Heart right ventricle (tissue), 16 donors: ENCODE measurements at regions of chr4 and their contacts with region 1.

Region 1: DNA sequence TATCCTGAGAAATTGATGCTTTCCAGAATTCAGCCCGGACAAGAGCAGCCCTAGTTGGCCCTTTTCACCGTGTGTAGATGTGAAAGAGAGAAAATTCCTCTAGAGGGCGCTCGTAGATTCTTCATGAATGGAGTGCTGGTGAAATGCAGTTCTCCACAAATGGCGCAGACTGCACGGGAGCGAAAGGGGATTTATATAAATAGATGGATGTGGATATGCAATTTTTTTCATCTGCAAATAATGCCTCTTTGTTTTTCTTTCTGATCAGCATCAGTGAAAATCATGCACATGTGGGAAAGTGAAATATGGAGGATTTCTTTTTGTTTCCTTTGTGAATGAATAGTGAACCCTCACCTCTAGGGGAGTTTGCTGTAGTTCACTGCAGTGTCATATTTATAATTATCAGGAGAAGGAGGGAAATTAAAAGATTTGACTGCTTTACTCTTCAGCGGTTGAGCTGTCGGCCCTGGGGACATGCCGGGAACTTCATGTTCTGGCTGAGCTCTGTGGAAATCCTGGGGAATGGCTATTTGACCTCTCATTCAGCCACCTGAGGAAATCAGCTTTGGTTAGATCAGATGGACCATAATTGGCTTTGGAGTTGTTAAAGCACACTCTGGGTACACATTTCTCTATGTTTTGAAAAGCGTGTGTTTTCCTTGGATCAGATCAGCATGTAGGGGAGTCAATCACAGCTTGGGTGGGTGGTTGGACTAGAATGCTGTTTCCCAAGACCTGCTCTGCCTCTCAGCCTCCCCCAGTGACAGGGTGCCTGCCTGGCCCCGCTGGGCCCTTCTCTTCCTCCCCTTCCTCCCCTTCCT is 115.0 kb upstream of the SHISA3 start:
- DNase-seq: peak in 1 of 2 donors; percentile 63
- ATAC-seq: peak; percentile 90 to 96 (median 94)
- H3K4me3 ChIP-seq: peak overlapping the region in 3 of 10 donors; percentile 4 to 19 (median 15)
- H3K27ac ChIP-seq: no peak overlapping the region
- H3K4me1 ChIP-seq: peaks cover 0 to 12% (median 3%) of the 10 kb centered on the region in 9 donors
- H3K27me3 ChIP-seq: peaks cover 0 to 6% (median 0%) of the 10 kb centered on the region in 7 donors
- CTCF ChIP-seq: peak; percentile 65 to 88 (median 82)

Region 2: GRCh38 chr4:42339935-42340406 is 57.7 kb after region 1 on chr4:
- intact Hi-C with region 1: loop called in 1 of 10 experiments (anchors 10 kb)
- DNase-seq: peak; percentile 46 to 55
- ATAC-seq: peak; percentile 85 to 96 (median 92)
- H3K4me3 ChIP-seq: no peak overlapping the region
- H3K27ac ChIP-seq: peak overlapping the region; percentile 55 to 82 (median 72)
- H3K4me1 ChIP-seq: peaks cover 0 to 24% (median 15%) of the 10 kb centered on the region in 9 donors
- H3K27me3 ChIP-seq: no peaks in the 10 kb centered on the region
- CTCF ChIP-seq: no peak

Region 3: DNA sequence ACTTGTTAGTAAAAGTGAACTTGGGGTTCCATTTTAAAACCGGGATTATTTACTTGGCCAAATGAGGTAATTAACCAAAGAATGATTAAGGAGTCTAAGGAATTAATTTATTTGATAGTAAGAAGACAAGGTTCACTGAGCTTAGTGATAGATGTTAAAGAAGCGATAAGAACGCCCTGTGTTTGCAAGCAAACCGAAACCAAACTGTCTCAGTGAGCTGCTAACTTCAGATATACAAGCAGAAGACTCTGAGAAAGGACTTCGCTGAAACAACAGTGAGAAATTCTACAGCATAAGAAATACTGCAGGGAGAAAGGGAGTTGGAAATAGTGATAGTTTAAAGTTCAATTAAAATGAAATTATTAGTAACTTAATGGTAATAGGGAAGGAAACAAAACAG is 77.4 kb after region 1 on chr4:
- intact Hi-C with region 1: loop called in 2 of 10 experiments (anchors 10 kb)
- DNase-seq: no peak
- ATAC-seq: no peak
- H3K4me3 ChIP-seq: peak overlapping the region in 6 of 10 donors; percentile 7 to 32 (median 23)
- H3K27ac ChIP-seq: peak overlapping the region in 2 of 10 donors; percentile 15 to 34
- H3K4me1 ChIP-seq: peaks cover 0 to 5% (median 0%) of the 10 kb centered on the region in 9 donors
- H3K27me3 ChIP-seq: peaks cover 0 to 16% (median 0%) of the 10 kb centered on the region in 7 donors
- CTCF ChIP-seq: no peak

Region 4: DNA sequence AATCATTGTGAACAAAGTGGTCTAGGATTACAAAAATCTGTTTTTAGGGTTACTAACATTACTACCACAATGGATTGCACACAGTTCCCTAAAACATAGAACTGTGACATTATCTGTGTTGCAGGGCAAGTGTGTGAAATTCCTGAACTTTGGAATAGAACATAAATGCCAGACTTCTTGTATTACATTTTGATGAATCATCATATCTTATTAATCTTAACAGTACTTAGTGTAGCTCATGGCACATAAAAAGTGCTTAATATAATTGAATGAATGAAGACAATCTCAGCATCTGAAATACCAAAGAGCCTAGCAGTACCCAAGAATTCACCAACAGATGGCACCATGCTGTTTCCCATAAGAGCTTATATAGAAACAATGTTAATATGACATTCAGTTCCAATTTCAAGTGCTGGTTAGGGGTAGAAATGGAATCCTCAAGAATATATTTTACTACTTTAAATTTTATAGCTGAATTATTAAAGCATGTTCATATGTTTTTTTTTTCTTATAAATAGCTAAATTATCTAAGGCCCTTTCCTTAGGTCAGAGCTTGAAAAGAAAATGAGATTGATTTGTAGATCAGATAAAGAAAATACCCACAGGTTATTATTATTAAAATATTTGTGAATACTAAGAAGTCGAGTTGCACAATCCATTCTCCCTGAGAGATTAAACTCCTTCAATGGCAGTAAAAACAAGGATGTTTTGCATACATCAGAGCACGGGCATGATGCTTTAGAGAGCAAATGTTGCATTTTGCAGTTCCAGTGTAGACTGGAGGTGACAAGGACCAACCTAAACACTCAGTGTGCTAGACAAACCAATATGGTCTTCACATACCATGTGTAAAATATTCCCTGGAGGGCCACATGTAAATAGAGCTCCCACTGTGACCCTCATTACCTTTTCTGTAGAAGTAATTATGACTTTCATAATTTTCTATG is 89.3 kb after region 1 on chr4:
- intact Hi-C with region 1: loop called in 3 of 10 experiments (anchors 10 kb)
- DNase-seq: peak in 1 of 2 donors; percentile 30
- ATAC-seq: peak in 6 of 8 donors; percentile 38 to 58 (median 50)
- H3K4me3 ChIP-seq: no peak overlapping the region
- H3K27ac ChIP-seq: no peak overlapping the region
- H3K4me1 ChIP-seq: no peaks in the 10 kb centered on the region
- H3K27me3 ChIP-seq: no peaks in the 10 kb centered on the region
- CTCF ChIP-seq: peak; percentile 27 to 77 (median 63)

Region 5: GRCh38 chr4:42519803-42520417 is 237.6 kb after region 1 on chr4:
- intact Hi-C with region 1: loop called (anchors 1 to 5 kb)
- DNase-seq: peak in 1 of 2 donors; percentile 51
- ATAC-seq: peak in 5 of 8 donors; percentile 44 to 64 (median 61)
- H3K4me3 ChIP-seq: no peak overlapping the region
- H3K27ac ChIP-seq: no peak overlapping the region
- H3K4me1 ChIP-seq: peaks cover 0 to 26% (median 10%) of the 10 kb centered on the region in 9 donors
- H3K27me3 ChIP-seq: no peaks in the 10 kb centered on the region
- CTCF ChIP-seq: peak; percentile 42 to 83 (median 67)

Region 6: GRCh38 chr4:42865572-42866189 is 583.4 kb after region 1 on chr4:
- intact Hi-C with region 1: loop called in 3 of 10 experiments (anchors 10 kb)
- DNase-seq: peak in 1 of 2 donors; percentile 32
- ATAC-seq: no peak
- H3K4me3 ChIP-seq: no peak overlapping the region
- H3K27ac ChIP-seq: no peak overlapping the region
- H3K4me1 ChIP-seq: no peaks in the 10 kb centered on the region
- H3K27me3 ChIP-seq: peaks cover 0 to 13% (median 5%) of the 10 kb centered on the region in 7 donors
- CTCF ChIP-seq: peak; percentile 50 to 82 (median 73)